GM12878 (cell line): ENCODE measurements at regions of chr2 and their contacts with region 1.

Region 1: DNA sequence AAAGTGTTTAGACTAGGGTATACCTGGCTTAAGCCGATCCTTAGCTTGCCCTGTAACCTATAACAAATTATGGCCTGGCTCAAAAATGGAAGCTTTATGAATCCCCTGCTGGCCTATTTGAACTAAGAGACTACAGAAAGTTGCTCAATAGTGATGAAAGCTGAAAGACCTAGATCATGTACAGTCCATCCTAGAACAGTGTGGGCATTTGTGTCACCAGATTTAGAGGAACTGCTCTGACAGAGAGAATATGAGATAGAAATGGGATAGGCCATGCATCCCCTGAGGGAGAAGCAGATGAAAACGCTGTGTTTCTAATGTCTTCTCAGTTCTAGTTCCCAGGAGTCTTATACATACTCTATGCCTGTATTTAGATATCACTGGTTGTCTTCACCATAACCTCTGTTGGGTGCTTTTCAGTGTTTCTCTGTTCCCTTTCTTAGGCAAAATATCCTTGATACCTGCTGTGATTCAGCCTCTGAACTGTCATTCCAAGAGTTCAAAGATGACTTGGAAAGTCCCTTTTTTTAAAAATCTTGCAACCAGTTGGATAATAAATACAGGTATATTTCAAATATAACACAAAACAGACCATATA is 246.9 kb upstream of the SLC39A10 start:
- DNase-seq: peak; percentile 60
- ATAC-seq: peak; percentile 80
- H3K4me3 ChIP-seq: no peak overlapping the region
- H3K27ac ChIP-seq: peak overlapping the region; percentile 29
- H3K4me1 ChIP-seq: no peaks in the 10 kb centered on the region
- H3K27me3 ChIP-seq: no peaks in the 10 kb centered on the region
- CTCF ChIP-seq: no peak
- EP300 ChIP-seq: peak; percentile 68 to 83; a peak in 3 of 4 replicates
- POLR2A ChIP-seq: no peak
- RAD21 ChIP-seq: no peak

Region 2: GRCh38 chr2:193837111-193837737 is 1572.9 kb before region 1 on chr2:
- CTCF ChIA-PET with region 1: no interaction called
- POLR2A ChIA-PET with region 1: no interaction called
- RAD21 ChIA-PET with region 1: no interaction called
- SMC1A ChIA-PET with region 1: no interaction called
- in situ Hi-C with region 1: no loop called
- intact Hi-C with region 1: no loop called
- DNase-seq: no peak
- ATAC-seq: no peak
- H3K4me3 ChIP-seq: no peak overlapping the region
- H3K27ac ChIP-seq: no peak overlapping the region
- H3K4me1 ChIP-seq: no peaks in the 10 kb centered on the region
- H3K27me3 ChIP-seq: no peaks in the 10 kb centered on the region
- CTCF ChIP-seq: no peak
- EP300 ChIP-seq: no peak
- POLR2A ChIP-seq: no peak
- RAD21 ChIP-seq: no peak

Region 3: GRCh38 chr2:195337597-195337996 is 72.6 kb before region 1 on chr2:
- CTCF ChIA-PET with region 1: no interaction called
- POLR2A ChIA-PET with region 1: interaction called, 3 read pairs
- RAD21 ChIA-PET with region 1: no interaction called
- SMC1A ChIA-PET with region 1: interaction called, 5 read pairs
- in situ Hi-C with region 1: no loop called
- intact Hi-C with region 1: loop called (anchors 1 kb)
- DNase-seq: no peak
- ATAC-seq: peak; percentile 56
- H3K4me3 ChIP-seq: no peak overlapping the region
- H3K27ac ChIP-seq: no peak overlapping the region
- H3K4me1 ChIP-seq: no peaks in the 10 kb centered on the region
- H3K27me3 ChIP-seq: no peaks in the 10 kb centered on the region
- CTCF ChIP-seq: no peak
- EP300 ChIP-seq: no peak
- POLR2A ChIP-seq: no peak
- RAD21 ChIP-seq: no peak

Region 4: GRCh38 chr2:195486987-195487644 is 76.9 kb after region 1 on chr2:
- CTCF ChIA-PET with region 1: interaction called, 6 read pairs
- POLR2A ChIA-PET with region 1: no interaction called
- RAD21 ChIA-PET with region 1: no interaction called
- SMC1A ChIA-PET with region 1: no interaction called
- in situ Hi-C with region 1: no loop called
- intact Hi-C with region 1: loop called (anchors 5 kb)
- DNase-seq: no peak
- ATAC-seq: peak; percentile 94
- H3K4me3 ChIP-seq: no peak overlapping the region
- H3K27ac ChIP-seq: no peak overlapping the region
- H3K4me1 ChIP-seq: no peaks in the 10 kb centered on the region
- H3K27me3 ChIP-seq: no peaks in the 10 kb centered on the region
- CTCF ChIP-seq: no peak
- EP300 ChIP-seq: no peak
- POLR2A ChIP-seq: no peak
- RAD21 ChIP-seq: no peak

Region 5: DNA sequence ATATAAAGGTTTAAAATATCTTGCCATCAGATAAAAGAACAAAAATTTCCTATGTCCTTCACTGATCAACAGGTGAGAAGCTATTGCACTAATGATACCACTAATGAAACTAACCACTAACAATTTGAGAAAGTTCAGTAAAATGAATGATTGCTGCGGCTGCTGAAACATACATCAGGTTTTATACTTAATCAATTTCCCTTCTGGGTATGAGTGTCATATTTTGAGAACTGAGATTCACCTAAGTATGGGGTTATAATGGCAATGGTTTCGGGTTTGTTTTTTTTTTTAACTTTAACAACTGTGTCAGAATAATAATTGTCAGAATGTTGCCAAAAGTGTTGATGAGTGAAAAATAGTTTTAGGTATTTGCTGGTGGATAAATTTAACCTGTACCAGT is 95.5 kb after region 1 on chr2:
- CTCF ChIA-PET with region 1: no interaction called
- POLR2A ChIA-PET with region 1: interaction called, 3 read pairs
- RAD21 ChIA-PET with region 1: interaction called, 3 read pairs
- SMC1A ChIA-PET with region 1: interaction called, 3 read pairs
- in situ Hi-C with region 1: no loop called
- intact Hi-C with region 1: loop called (anchors 1 kb)
- DNase-seq: peak; percentile 83
- ATAC-seq: peak; percentile 95
- H3K4me3 ChIP-seq: no peak overlapping the region
- H3K27ac ChIP-seq: no peak overlapping the region
- H3K4me1 ChIP-seq: peaks cover 3% of the 10 kb centered on the region; the same call in 1 of the 2 replicates
- H3K27me3 ChIP-seq: no peaks in the 10 kb centered on the region
- CTCF ChIP-seq: no peak
- EP300 ChIP-seq: peak; percentile 95 to 97
- POLR2A ChIP-seq: no peak
- RAD21 ChIP-seq: no peak